ENCODE measurements at regions of chr10 and their contacts with region 1.

Region 1: DNA sequence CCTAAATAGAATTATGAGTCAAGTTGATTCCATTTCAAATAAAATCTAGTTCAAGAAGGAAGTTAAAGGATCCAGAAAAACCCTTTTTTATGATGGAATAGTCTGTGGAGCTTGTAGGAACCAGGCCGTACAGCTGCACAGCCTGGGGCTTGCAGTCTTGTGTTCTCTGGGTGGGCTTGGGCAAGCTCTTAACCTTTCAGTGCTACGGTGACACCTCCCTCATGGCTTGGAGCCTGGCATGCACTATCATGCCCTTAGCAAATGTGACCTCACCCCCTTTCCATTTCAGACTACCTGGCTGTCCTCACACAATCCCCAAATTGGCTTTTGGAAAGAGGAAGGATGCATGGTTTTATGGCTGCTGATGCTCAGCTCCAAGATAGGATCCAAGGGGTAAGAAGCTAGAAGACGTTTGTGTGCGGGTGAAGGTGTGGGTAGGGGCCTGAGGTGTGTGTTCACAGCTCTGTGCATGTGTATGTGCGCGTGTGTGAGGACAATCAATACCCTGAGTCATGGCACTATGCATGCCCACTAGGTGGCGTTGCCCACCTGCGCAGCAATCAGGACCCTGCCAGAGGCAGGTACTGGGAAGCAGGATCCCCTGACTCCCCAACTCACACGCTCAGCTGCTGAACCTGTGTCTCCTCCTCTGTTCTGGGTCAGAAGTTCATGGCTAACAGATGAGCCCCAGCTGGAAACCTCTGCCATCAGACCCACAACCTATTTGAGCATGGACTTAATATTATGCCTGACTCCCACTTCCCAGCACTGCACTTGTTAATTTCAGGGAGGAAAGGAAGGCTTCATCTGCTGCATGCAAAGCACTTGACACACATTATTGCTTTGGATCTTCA is 113.4 kb downstream of the PTPN20 start:
- DNase-seq: peak; percentile 69 to 87
- ATAC-seq: peak; percentile 84 to 96
- H3K4me3 ChIP-seq: no peak overlapping the region
- H3K27ac ChIP-seq: 0 out of 6 replicates have a peak overlapping the region, but pooled peaks of 1 of the 2 experiments have one; percentile 40
- H3K4me1 ChIP-seq: no peaks in the 10 kb centered on the region
- CTCF ChIP-seq: peak; percentile 93
- EP300 ChIP-seq: no peak
- POLR2A ChIP-seq: no peak
- RAD21 ChIP-seq: peak; percentile 87 to 91

Region 2: DNA sequence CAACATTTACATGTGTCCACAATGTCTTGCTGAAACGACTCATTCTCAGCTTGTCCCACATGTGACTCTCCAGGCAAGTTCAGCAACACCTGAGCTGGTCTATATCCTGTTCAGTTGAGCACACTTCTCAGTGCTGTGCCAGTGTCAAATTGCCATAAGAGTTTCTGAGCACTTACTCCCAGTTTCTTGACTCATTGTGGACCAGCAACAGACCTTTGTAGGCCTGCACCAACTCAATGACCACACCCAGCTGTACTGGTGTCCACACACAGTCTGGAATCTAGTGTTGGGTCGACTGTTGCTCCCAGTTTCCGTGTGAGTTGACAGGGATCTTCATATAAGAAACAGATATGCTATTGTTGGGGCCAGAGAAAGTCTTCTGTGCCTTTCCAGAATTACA is 25.4 kb before region 1 on chr10:
- CTCF ChIA-PET with region 1: interaction called, 25 read pairs
- POLR2A ChIA-PET with region 1: no interaction called
- DNase-seq: no peak
- ATAC-seq: no peak
- H3K4me3 ChIP-seq: no peak overlapping the region
- H3K27ac ChIP-seq: no peak overlapping the region
- H3K4me1 ChIP-seq: no peaks in the 10 kb centered on the region
- CTCF ChIP-seq: no peak
- EP300 ChIP-seq: no peak
- POLR2A ChIP-seq: no peak
- RAD21 ChIP-seq: no peak

Region 3: DNA sequence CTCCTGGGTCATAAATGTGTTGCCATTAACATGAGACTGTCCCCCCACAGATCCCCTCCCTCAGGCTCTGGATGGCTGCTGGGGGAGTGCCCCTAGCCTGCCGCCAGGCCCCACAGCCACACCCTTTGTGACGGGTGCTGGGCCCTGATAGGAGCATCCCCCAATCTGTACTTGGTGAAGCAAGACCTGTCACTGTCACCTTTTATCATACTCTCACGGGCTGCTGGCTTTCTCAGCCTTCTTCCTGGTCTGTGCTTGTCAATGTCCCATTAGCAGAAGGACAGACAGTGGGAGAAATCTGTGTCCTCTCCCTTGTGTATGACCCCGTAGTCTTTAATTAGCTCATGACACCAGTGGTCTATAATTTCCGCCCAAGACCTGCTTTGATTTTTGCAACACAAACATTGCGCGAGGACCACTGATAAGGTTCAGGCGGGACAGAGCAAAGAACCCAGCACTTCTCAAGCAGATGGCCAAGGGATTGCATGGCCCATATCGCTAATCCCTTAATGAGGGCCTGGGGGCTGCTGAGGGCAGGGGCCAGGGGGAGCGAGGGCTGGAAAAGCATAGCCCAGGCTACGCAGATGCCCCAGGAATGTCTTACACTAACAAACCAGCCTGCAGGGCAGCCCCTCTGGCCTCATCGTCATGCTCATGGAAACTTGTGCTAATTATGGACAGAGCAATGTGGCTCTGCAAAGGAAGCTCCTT is 14.4 kb after region 1 on chr10:
- CTCF ChIA-PET with region 1: interaction called, 59 read pairs
- POLR2A ChIA-PET with region 1: no interaction called
- DNase-seq: no peak
- ATAC-seq: no peak
- H3K4me3 ChIP-seq: no peak overlapping the region
- H3K27ac ChIP-seq: no peak overlapping the region
- H3K4me1 ChIP-seq: no peaks in the 10 kb centered on the region
- CTCF ChIP-seq: no peak
- EP300 ChIP-seq: no peak
- POLR2A ChIP-seq: no peak
- RAD21 ChIP-seq: no peak

Region 4: DNA sequence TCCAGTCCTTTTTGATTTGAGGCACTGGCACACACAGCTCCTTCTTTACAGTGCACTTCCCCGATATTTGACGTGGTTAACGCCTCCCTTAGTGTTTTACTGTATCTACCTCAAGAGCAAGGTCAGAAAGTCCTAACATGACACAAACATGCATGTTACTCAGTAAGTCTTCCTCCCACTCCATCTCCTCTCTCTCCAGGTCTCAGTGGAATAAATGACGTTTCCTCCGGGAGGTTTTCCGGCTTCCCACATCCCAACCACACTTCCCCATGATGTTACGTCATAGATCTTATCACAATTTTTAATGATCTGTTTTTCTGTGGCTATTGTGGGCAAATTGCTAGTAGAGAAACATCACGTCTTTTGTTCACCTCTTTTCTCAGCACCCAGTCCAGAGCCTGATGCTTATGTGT is 52.3 kb after region 1 on chr10:
- CTCF ChIA-PET with region 1: interaction called, 11 read pairs
- POLR2A ChIA-PET with region 1: no interaction called
- DNase-seq: no peak
- ATAC-seq: no peak
- H3K4me3 ChIP-seq: no peak overlapping the region
- H3K27ac ChIP-seq: no peak overlapping the region
- H3K4me1 ChIP-seq: no peaks in the 10 kb centered on the region
- CTCF ChIP-seq: no peak
- EP300 ChIP-seq: no peak
- POLR2A ChIP-seq: no peak
- RAD21 ChIP-seq: no peak

Region 5: GRCh38 chr10:47311932-47312662 is 287.5 kb after region 1 on chr10:
- CTCF ChIA-PET with region 1: interaction called, 131 read pairs
- POLR2A ChIA-PET with region 1: no interaction called
- DNase-seq: peak; percentile 76 to 86
- ATAC-seq: peak; percentile 89 to 97
- H3K4me3 ChIP-seq: no peak overlapping the region
- H3K27ac ChIP-seq: no peak overlapping the region
- H3K4me1 ChIP-seq: no peaks in the 10 kb centered on the region
- CTCF ChIP-seq: peak; percentile 85
- EP300 ChIP-seq: no peak
- POLR2A ChIP-seq: no peak
- RAD21 ChIP-seq: peak; percentile 95

Region 6: DNA sequence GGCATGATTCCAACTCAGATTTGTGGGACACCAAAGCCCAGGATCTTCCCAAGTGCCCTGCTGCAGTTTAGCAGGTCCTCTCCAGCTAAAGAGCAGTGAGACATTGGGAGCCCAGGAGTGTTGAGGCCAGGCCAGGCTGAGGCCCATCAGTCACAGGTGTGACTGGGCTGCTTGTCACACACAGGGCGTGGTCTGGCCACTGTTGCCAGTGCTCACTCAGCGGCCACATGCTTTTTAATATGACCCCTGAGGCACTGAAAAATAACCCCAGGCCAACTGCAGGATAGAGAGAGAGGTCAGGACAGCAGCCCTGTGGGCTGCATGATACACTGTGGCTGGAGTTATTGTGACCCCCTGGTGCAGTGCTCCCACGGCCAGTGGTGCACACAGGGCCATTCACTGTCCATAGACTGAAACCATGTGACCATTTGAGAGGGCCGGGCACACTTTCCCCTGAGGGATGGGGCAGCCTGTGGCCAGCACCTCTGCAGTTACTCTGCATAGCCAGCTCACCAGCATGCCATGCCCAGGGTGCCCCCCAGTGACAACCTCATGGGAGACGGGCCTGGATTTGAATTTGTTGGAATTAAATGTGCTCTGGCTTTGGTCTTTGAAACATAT is 301.8 kb after region 1 on chr10:
- CTCF ChIA-PET with region 1: interaction called, 11 read pairs
- POLR2A ChIA-PET with region 1: no interaction called
- DNase-seq: no peak
- ATAC-seq: no peak
- H3K4me3 ChIP-seq: no peak overlapping the region
- H3K27ac ChIP-seq: no peak overlapping the region
- H3K4me1 ChIP-seq: peaks cover 6% of the 10 kb centered on the region; the same call in 1 of the 3 replicates
- CTCF ChIP-seq: no peak
- EP300 ChIP-seq: no peak
- POLR2A ChIP-seq: no peak
- RAD21 ChIP-seq: no peak